Upper lobe of right lung (tissue), 1 donor: ENCODE measurements at regions of chr7 and their contacts with region 1.

Region 1: DNA sequence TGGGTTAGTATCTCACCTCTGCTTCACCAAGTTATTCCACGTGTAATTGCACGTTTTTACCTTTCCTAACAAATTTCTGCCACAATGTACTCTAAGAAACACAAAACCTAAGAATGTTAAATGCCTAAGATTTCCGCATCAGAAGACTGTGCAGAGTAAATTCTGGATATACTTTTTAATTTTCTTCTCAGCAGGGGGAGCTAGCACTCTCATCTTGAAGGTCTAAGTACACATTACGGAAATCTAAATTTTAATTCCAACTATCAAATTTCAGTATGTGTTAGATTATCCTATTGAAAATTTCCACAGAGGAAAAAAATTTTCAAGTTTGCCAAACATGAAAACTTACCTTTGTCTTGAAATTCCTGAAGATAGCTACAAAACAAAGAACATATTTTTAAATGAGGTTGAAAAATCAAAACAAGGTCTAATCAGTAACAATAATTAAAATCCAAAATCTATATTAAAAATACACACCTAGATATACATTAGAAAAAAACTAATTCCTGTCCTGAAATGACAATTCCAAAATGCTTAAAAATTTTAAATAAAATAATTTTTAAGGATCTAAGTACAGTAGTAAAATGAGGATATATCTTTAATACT is 10.5 kb downstream of the SKAP2 start:
- DNase-seq: no peak
- ATAC-seq: peak; percentile 50
- H3K4me3 ChIP-seq: no peak overlapping the region
- H3K27ac ChIP-seq: peak overlapping the region; percentile 86
- H3K4me1 ChIP-seq: peaks cover 16% of the 10 kb centered on the region
- H3K27me3 ChIP-seq: no peaks in the 10 kb centered on the region
- CTCF ChIP-seq: peak; percentile 57

Region 2: GRCh38 chr7:26603631-26604030 is 250.3 kb before region 1 on chr7:
- intact Hi-C with region 1: no loop called
- DNase-seq: no peak
- ATAC-seq: no peak
- H3K4me3 ChIP-seq: no peak overlapping the region
- H3K27ac ChIP-seq: no peak overlapping the region
- H3K4me1 ChIP-seq: no peaks in the 10 kb centered on the region
- H3K27me3 ChIP-seq: no peaks in the 10 kb centered on the region
- CTCF ChIP-seq: no peak

Region 3: GRCh38 chr7:27108390-27109127 is 254.7 kb after region 1 on chr7:
- intact Hi-C with region 1: loop called (anchors 10 kb)
- DNase-seq: no peak
- ATAC-seq: peak; percentile 72
- H3K4me3 ChIP-seq: peak overlapping the region; percentile 46
- H3K27ac ChIP-seq: peak overlapping the region; percentile 91
- H3K4me1 ChIP-seq: peaks cover 18% of the 10 kb centered on the region
- H3K27me3 ChIP-seq: peaks cover 12% of the 10 kb centered on the region
- CTCF ChIP-seq: peak; percentile 19

Region 4: DNA sequence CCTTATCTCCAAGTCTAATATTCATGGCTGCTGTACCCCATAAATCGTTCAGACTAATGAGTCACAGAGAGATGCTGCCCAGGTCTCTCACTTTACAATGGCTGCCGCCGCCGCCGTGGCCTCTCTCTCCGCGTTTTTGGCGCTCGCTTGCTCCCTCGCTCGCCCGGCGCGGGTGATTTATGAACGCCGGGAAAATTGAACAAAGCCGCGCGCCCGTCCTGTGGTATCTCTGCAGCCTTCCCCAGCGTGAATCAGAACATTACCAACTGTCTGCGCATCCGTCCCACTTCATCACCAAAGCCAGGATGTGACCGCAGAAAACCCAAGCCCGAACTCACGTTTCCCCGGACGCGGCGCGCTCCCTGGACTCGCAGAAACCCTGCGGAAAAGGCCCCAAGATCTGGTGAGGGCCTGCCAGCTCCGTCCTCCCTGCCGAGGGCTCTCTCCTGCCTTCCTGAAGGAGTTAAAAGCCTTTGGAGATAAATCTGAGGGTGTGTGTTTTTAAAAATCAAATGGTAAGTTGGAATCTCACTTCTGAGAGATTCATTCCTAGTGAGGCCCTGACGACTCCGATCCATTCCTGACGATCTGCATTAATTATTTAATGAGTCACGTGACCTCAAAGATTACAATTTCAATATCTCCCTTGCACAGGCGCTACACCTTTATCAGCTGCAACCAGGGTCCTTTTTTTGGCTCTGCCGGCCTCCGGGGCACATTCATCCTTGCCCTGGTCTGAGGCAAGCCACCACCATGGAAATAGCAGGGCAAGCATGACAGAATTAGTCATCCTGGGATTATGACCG is 270.4 kb after region 1 on chr7:
- intact Hi-C with region 1: loop called (anchors 5 kb)
- DNase-seq: no peak
- ATAC-seq: peak; percentile 6
- H3K4me3 ChIP-seq: peak overlapping the region; percentile 45
- H3K27ac ChIP-seq: peak overlapping the region; percentile 89
- H3K4me1 ChIP-seq: peaks cover 28% of the 10 kb centered on the region
- H3K27me3 ChIP-seq: peaks cover 5% of the 10 kb centered on the region
- CTCF ChIP-seq: no peak